Activated B cell treated with CpG ODN at 0.5 μM for 24 hours (primary cell): ENCODE measurements at regions of chr13 and their contacts with region 1.

Region 1: GRCh38 chr13:46553886-46554858 is 1.2 kb downstream of the LRCH1 start:
- DNase-seq: peak; percentile 72
- ATAC-seq: peak; percentile 57
- H3K4me3 Mint-ChIP-seq: peak overlapping the region; percentile 96
- H3K27ac Mint-ChIP-seq: peak overlapping the region; percentile 94
- H3K4me1 Mint-ChIP-seq: peaks cover 53% of the 10 kb centered on the region
- H3K27me3 Mint-ChIP-seq: no peaks in the 10 kb centered on the region
- CTCF ChIP-seq: no peak

Region 2: GRCh38 chr13:46184277-46184699 is 369.9 kb before region 1 on chr13:
- CTCF ChIA-PET with region 1: no interaction called
- POLR2A ChIA-PET with region 1: interaction called, 3 read pairs
- intact Hi-C with region 1: loop called (anchors 5 kb)
- DNase-seq: peak; percentile 61
- ATAC-seq: peak; percentile 53
- H3K4me3 Mint-ChIP-seq: peak overlapping the region; percentile 99
- H3K27ac Mint-ChIP-seq: peak overlapping the region; percentile 98
- H3K4me1 Mint-ChIP-seq: peaks cover 44% of the 10 kb centered on the region
- H3K27me3 Mint-ChIP-seq: no peaks in the 10 kb centered on the region
- CTCF ChIP-seq: no peak

Region 3: DNA sequence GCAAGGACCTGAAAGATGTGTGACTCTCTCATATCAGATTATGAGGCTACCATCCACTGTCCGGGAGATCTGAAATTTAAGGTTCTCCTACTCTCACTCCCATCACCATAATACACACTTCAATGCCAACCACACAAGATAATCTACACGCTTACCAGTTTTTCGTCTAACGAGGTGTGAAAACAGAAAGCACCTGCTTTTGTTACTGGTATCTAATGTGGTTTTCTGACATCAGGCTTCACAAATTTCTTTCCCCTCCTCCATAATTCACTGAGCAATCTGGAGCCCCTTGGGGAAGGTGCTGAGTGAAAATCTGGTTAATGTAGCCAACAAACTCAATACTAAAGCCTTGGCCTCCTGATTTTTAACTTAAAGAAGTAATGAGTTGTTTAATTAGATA is 11.3 kb before region 1 on chr13:
- CTCF ChIA-PET with region 1: interaction called, 12 read pairs
- POLR2A ChIA-PET with region 1: no interaction called
- intact Hi-C with region 1: no loop called
- DNase-seq: no peak
- ATAC-seq: no peak
- H3K4me3 Mint-ChIP-seq: no peak overlapping the region
- H3K27ac Mint-ChIP-seq: no peak overlapping the region
- H3K4me1 Mint-ChIP-seq: peaks cover 4% of the 10 kb centered on the region
- H3K27me3 Mint-ChIP-seq: no peaks in the 10 kb centered on the region
- CTCF ChIP-seq: no peak

Region 4: DNA sequence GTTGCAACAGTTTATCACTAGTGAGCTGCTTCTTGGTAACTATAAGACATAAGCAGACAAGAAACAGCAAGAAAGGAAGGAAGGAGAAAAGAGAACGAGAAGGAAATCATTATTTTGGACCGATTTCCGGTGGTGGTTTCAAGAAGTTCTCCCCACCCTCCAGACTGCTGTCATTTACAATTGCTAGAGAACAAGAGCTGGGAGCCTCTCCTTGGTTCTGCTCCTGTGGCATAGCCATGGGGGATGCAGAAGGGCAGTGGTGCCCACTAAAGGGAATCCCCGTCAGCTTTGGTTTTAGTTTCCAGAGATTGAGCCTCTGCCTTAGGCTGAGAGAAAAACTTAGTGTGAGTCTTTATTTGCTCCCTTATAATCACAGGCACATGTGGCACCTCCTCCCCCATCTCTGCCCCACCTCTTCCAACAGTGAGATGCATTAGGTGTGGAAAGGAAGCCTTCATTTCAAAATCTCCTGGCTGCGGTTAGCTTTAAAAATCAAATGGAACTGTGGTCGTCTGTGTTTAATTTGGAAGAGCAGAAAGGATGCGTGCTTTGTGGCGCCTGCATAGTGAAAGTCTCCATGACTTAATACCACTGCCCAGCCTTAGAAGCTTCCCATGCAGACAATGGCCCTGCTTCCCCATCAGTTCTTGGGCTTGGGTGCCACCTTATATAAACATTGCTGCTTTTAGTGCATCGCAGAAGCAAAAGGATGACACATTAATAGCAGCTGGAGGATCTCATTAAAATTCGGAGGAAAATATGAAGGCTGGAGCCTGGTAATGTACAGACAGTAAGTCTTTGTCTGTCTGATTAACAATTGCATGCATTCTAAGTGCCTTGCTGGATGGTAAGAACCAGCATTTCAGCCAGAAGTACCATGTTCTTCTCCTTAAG is 23.8 kb after region 1 on chr13:
- CTCF ChIA-PET with region 1: interaction called, 10 read pairs
- POLR2A ChIA-PET with region 1: interaction called, 20 read pairs
- intact Hi-C with region 1: loop called (anchors 1 kb)
- DNase-seq: no peak
- ATAC-seq: peak; percentile 41
- H3K4me3 Mint-ChIP-seq: peak overlapping the region; percentile 65
- H3K27ac Mint-ChIP-seq: peak overlapping the region; percentile 90
- H3K4me1 Mint-ChIP-seq: peaks cover 87% of the 10 kb centered on the region
- H3K27me3 Mint-ChIP-seq: no peaks in the 10 kb centered on the region
- CTCF ChIP-seq: no peak

Region 5: DNA sequence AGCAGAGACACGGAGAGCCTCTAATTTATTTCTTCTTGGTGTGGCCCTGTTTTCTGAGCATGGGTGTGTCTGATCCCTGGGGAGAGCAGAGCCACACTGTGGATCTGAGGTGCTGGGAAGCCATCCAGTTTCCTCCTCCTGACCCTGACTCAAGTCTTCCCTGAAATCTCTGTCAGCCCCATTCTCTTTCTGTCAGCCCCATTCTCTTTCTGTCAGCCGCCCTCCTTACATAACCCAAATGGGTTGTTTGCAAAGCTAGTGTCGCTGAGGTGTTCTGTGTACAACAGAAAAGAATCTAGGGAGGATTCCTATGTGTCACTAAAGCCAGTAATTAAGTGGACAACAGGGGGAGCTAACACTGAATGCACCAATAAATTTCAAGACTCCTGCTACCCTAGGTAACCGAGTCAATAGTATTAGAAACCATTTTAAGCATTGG is 49.0 kb after region 1 on chr13:
- CTCF ChIA-PET with region 1: interaction called, 11 read pairs
- POLR2A ChIA-PET with region 1: interaction called, 5 read pairs
- intact Hi-C with region 1: loop called (anchors 1 kb)
- DNase-seq: no peak
- ATAC-seq: no peak
- H3K4me3 Mint-ChIP-seq: no peak overlapping the region
- H3K27ac Mint-ChIP-seq: no peak overlapping the region
- H3K4me1 Mint-ChIP-seq: peaks cover 92% of the 10 kb centered on the region
- H3K27me3 Mint-ChIP-seq: no peaks in the 10 kb centered on the region
- CTCF ChIP-seq: no peak

Region 6: DNA sequence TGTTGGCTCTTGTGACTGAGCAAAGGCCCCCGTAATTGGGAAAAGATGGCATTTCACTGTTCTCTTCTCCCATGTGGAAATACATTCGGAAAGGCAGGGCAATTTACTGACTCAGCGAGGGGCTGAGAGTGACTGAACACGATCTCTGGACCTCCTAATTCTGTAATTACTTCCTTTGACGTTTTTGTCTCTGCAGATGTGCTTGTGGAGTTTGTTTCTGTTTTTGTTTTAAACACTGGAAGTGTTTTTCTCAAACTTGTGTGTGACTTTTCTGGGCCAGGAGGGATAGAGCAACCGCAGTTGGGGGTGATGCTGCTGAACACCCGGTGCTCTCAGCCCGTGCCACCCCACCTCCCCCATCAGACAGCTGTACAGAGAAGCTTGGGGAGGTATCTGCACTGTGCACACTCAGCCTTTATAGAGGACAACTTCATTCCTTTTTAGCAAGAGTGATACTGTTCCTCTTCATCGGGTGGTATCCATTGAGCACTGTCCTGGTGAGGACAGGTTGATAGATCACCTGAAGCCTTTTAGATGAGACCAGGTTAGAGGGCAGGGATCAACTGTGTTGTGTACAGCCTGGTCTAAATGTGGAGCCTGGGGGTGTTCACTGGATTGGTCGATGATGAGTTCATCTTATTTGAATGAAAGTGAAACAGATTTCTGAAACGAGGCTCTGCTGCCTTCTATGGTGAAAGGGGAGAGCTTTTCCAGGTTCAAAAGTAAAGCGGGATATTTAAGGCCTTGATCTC is 125.4 kb after region 1 on chr13:
- CTCF ChIA-PET with region 1: interaction called, 55 read pairs
- POLR2A ChIA-PET with region 1: interaction called, 22 read pairs
- intact Hi-C with region 1: loop called (anchors 1 kb)
- DNase-seq: peak; percentile 20
- ATAC-seq: peak; percentile 90
- H3K4me3 Mint-ChIP-seq: no peak overlapping the region
- H3K27ac Mint-ChIP-seq: no peak overlapping the region
- H3K4me1 Mint-ChIP-seq: peaks cover 29% of the 10 kb centered on the region
- H3K27me3 Mint-ChIP-seq: no peaks in the 10 kb centered on the region
- CTCF ChIP-seq: no peak

Region 7: DNA sequence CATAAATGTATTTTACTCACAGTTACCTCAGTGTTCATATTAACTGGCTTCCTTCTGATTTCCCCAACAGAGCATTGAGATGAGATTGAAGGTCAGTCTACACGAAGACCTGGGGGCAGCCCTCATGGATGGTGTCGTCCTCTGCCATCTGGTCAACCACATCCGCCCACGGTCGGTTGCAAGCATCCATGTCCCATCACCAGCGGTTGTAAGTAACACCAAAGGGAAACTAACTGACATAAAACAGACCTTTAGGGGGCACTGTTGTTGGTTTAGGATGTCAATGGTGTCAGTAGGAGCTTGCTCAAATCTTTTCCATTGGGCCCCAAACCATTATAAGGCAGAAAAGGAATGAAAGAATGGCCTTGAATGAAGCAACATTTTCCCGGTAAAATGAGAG is 174.6 kb after region 1 on chr13:
- CTCF ChIA-PET with region 1: interaction called, 168 read pairs
- POLR2A ChIA-PET with region 1: no interaction called
- intact Hi-C with region 1: no loop called
- DNase-seq: no peak
- ATAC-seq: no peak
- H3K4me3 Mint-ChIP-seq: no peak overlapping the region
- H3K27ac Mint-ChIP-seq: no peak overlapping the region
- H3K4me1 Mint-ChIP-seq: no peaks in the 10 kb centered on the region
- H3K27me3 Mint-ChIP-seq: no peaks in the 10 kb centered on the region
- CTCF ChIP-seq: no peak